ENCODE measurements at regions of chr20 and their contacts with region 1.

Region 1: DNA sequence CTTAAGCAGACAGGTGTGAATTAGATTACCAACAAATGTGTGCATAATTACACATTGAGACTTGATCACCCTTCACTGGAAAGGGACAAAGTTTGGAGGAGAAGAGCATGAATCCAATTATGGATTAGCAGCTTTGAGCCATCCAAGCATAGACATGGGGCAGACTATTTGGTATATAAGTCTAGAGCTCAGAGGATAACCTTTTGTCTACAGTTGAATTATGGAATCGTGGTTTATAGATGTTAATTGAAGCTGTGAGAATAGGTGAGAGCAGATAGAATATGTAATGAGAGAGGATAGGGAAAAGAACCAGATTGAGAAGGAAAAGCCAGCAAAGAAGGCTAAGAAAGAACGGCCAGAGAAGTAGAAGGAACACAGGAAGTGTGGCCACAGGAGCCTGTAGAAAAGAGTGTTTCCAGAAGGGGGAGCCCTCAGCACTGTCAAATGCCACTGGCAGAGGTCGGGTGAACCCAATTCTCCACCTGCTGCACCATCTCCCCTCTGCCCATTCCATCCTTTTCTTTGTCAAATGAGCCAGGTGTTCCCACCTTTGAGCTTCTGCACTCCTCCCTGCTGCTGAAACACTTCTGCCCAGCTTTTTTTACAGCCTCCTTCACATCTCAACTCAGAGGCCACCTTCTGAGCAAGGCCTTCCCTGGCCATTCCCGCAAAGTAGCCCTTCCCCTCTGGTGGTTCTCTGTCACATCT is 7.3 kb downstream of the DNTTIP1 start:
- DNase-seq: no peak
- H3K4me3 ChIP-seq: no peak overlapping the region
- CTCF ChIP-seq: peak; percentile 75

Region 2: DNA sequence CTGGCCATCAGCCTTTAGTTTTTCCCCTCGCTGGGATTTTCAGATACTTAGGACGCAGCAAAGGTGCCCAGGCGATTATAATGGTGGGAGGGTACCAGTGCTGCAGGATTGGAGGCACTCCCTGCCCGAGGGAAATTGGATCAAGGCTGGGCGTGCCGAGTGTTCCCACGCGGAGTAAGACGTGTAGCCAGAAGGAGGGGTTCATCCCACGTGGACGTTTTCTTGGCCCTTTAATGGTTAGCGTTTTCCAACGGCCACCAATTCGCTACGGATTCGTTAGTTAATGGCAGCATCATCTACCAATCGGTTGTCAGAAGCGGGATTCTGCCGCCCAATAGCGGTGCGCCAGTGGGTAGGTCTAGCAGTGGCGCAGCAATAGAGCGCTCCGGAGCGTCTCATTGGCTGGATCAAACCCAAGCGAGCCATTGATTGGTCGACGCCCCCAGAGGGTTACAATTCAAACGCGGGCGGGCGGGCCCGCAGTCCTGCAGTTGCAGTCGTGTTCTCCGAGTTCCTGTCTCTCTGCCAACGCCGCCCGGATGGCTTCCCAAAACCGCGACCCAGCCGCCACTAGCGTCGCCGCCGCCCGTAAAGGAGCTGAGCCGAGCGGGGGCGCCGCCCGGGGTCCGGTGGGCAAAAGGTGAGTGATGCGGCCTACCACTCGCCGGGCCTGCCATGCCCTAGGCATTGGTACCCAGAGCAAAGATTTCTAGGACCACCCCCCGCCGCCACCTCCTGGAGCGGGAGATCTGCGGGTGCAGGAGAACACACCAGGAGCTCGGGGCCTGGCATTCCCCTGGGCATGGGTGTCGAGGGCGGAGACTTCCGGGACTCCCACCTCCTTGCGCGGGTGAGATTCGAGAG is 13.3 kb after region 1 on chr20 and contains the start of gene UBE2C:
- CTCF ChIA-PET with region 1: interaction called, 41 read pairs
- POLR2A ChIA-PET with region 1: no interaction called
- DNase-seq: peak; percentile 98
- H3K4me3 ChIP-seq: peak within 1 kb of the TSS; percentile 79
- CTCF ChIP-seq: no peak

Region 3: GRCh38 chr20:45823949-45824835 is 25.1 kb after region 1 on chr20:
- CTCF ChIA-PET with region 1: interaction called, 16 read pairs
- POLR2A ChIA-PET with region 1: no interaction called
- DNase-seq: no peak
- H3K4me3 ChIP-seq: no peak overlapping the region; the same call in 1 of the 2 replicates
- CTCF ChIP-seq: peak; percentile 61

Region 4: DNA sequence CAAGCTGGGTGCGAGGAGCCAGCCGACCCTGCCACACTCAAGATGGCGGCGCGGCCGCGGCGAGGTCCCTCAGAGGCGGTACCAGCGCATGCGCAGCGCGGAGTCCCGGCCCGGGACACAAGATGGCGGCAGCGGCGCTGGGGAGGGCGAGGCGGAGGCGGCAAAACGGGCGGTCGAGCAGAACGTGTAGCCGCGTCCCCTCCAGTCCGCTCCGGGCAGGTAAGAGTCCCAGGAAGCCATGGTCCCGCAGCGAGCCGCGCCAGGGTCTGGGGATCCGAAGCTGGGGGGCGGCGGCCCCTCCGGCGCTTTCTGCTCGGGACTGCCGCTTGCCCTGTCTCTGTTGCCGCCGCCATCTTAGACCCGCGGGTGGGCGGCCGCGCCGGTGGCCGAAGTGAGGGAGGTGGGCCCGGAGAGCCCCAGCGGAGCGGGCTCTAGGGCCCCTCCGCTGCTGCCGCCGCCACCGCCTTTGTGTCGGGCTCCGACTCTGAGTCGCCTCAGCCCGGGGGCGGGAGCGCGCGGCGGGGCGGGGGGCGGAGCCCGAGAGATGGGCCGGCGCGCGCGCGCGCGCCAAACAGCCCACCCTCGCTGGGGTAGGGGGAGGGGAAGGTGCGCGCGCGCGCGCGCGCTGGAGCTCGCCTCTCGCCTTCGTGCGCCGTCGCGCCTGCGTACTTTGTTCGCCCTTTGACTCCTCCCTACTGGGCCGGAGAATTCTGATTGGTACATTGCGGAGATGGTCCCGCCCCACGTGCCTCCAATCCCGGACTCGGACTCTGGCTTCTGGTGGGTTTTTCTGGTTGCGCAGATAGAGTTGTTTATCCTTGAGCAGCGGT is 135.7 kb after region 1 on chr20 and contains the start of gene PCIF1:
- CTCF ChIA-PET with region 1: interaction called, 10 read pairs
- POLR2A ChIA-PET with region 1: no interaction called
- DNase-seq: peak; percentile 67
- H3K4me3 ChIP-seq: peak within 1 kb of the TSS; percentile 99
- CTCF ChIP-seq: no peak

Measured in AG04449 (cell line).